Activated CD4-positive, alpha-beta memory T cell treated with anti-CD3 and anti-CD28 coated beads for 36 hours (primary cell): ENCODE measurements at regions of chr17 and their contacts with region 1.

Region 1: GRCh38 chr17:44324571-44325275 is at the start of gene SLC25A39:
- DNase-seq: peak; percentile 96
- H3K4me3 Mint-ChIP-seq: peak within 1 kb of the TSS; percentile 89
- H3K27ac Mint-ChIP-seq: peak within 1 kb of the TSS; percentile 94
- H3K4me1 Mint-ChIP-seq: peaks cover 21% of the 10 kb centered on the region
- H3K27me3 Mint-ChIP-seq: no peaks in the 10 kb centered on the region
- total RNA-seq, gene SLC25A39: 121 to 122 TPM

Region 2: DNA sequence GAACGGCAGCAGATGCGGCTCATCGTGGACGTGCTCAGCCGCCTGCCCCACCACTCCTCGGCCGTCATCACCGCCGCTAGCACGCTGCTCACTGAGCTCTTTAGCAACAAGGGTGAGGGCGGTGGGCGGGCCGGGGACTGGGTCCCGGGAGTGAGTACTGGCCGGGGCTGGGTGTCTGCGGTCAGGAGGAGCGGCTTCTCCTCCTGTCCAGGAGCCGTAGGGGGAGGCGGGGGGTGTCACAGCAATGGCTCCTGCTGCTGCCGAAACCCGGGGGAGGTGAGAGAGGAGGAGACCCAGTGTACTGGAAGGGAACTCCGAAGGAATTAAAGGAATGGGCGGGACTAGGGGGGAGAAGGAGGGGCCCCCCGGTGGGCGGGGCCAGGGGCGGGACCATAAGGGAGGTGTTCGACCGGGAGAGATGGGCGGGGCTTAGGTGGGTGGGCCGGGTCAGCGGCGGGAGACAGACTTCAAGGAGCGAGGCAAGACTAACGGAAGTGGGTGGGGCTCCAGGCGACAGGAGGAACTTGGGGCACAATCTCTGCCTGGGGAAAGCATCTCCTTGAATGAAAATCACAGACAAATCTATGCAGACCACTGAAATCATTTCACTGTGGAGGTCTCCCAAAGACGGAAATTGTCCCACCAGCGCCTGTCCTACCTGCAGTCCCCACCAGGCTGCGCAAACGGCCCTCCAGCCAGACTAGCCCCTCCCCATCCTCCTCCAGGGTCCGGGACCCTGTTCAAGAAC is 318.0 kb before region 1 on chr17:
- CTCF ChIA-PET with region 1: no interaction called
- POLR2A ChIA-PET with region 1: no interaction called
- intact Hi-C with region 1: loop called (anchors 5 kb)
- DNase-seq: peak; percentile 100
- H3K4me3 Mint-ChIP-seq: peak overlapping the region; percentile 86
- H3K27ac Mint-ChIP-seq: peak overlapping the region; percentile 3
- H3K4me1 Mint-ChIP-seq: peaks cover 23% of the 10 kb centered on the region
- H3K27me3 Mint-ChIP-seq: peaks cover 6% of the 10 kb centered on the region

Region 3: GRCh38 chr17:44141717-44142285 is 182.9 kb before region 1 on chr17 and contains the start of gene HROB:
- CTCF ChIA-PET with region 1: no interaction called
- POLR2A ChIA-PET with region 1: no interaction called
- intact Hi-C with region 1: loop called (anchors 1 kb)
- DNase-seq: peak; percentile 99
- H3K4me3 Mint-ChIP-seq: peak within 1 kb of the TSS; percentile 87
- H3K27ac Mint-ChIP-seq: peak within 1 kb of the TSS; percentile 89
- H3K4me1 Mint-ChIP-seq: peaks cover 24% of the 10 kb centered on the region
- H3K27me3 Mint-ChIP-seq: peaks cover 4% of the 10 kb centered on the region
- total RNA-seq, gene HROB: 17.9 to 19.8 TPM

Region 4: DNA sequence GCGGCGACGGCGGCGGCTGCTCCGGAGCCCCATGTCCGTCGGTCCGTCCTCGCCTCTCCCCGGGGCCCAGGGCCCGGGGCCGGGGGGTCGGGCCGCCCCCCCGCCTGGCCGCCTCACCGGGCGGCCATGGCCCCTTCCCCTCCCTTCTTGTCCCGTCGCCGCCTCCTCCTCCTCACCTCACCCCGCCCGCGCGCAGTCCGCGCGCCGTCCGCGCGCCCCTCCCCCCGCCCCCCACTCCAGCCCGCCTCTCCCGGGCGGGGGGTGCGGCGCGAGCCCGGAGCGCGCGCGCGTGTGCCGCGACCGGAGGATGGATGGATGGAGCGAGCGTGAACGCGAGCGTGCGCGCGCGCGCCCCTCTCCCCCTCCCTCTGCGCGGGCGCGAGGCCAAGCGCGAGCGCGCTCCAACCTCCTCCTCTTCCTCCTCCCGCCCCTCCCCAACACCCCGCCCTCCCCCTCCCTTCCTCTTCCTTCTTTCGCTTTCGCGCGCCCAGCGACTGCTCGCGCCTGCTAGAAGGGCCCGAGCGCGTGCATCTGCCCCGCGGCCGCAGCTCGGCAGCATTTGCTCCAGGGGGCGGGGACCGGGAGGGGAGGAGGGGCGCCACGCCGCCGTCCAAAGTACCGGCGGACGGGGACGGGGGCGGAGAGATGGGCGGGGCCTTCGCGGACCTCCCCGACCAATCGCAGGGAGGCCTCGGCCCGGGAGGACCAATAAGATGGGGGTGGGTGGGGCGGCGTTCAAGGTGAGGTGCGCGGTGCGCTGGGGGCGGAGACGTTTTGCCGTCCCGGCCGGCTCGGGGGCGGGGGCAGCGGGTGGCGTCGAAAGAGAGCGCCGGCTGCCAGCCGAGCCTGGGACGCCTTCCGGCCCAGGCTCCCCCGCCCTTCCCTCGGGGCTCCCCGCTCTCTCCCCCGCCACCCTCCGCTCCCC is 124.9 kb before region 1 on chr17 and contains the start of gene ATXN7L3:
- CTCF ChIA-PET with region 1: interaction called, 8 read pairs
- POLR2A ChIA-PET with region 1: no interaction called
- intact Hi-C with region 1: loop called (anchors 1 kb)
- DNase-seq: peak; percentile 100
- H3K4me3 Mint-ChIP-seq: peak within 1 kb of the TSS; percentile 91
- H3K27ac Mint-ChIP-seq: peak within 1 kb of the TSS; percentile 92
- H3K4me1 Mint-ChIP-seq: peaks cover 41% of the 10 kb centered on the region
- H3K27me3 Mint-ChIP-seq: no peaks in the 10 kb centered on the region
- total RNA-seq, gene ATXN7L3: 63.4 to 69.7 TPM

Region 5: GRCh38 chr17:44308320-44308818 is 16.4 kb before region 1 on chr17 and contains the start of gene RUNDC3A:
- CTCF ChIA-PET with region 1: interaction called, 3 read pairs
- POLR2A ChIA-PET with region 1: no interaction called
- intact Hi-C with region 1: loop called (anchors 2 kb)
- DNase-seq: peak; percentile 88
- H3K4me3 Mint-ChIP-seq: peak within 1 kb of the TSS; percentile 23
- H3K27ac Mint-ChIP-seq: no peak within 1 kb of the TSS
- H3K4me1 Mint-ChIP-seq: peaks cover 7% of the 10 kb centered on the region
- H3K27me3 Mint-ChIP-seq: peaks cover 22% of the 10 kb centered on the region
- total RNA-seq, gene RUNDC3A: not detected

Region 6: DNA sequence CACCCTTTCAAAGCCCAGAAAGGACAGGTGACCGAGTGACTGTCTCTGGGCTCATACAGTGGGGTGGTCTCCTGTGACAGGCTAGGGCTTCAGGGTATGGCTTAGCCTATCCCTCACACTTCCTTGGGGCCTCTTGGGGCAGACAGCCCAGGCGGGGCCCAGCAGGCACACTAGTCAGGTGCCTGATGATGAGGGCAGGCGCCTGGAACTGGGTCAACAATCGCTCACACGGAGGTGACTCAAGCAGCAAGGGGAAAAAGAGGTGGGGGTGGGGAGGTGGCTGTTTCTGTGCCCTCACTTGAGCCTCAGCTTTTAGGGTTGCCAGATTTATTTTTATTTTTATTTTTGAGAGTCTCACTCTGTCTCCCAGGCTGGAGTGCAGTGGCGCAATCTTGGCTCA is 14.0 kb after region 1 on chr17:
- CTCF ChIA-PET with region 1: no interaction called
- POLR2A ChIA-PET with region 1: no interaction called
- intact Hi-C with region 1: no loop called
- DNase-seq: peak; percentile 56
- H3K4me3 Mint-ChIP-seq: no peak overlapping the region
- H3K27ac Mint-ChIP-seq: no peak overlapping the region
- H3K4me1 Mint-ChIP-seq: peaks cover 4% of the 10 kb centered on the region
- H3K27me3 Mint-ChIP-seq: no peaks in the 10 kb centered on the region

Region 7: GRCh38 chr17:45021607-45022287 is 697.0 kb after region 1 on chr17:
- CTCF ChIA-PET with region 1: no interaction called
- POLR2A ChIA-PET with region 1: no interaction called
- intact Hi-C with region 1: no loop called
- DNase-seq: peak; percentile 71
- H3K4me3 Mint-ChIP-seq: peak overlapping the region; percentile 12
- H3K27ac Mint-ChIP-seq: no peak overlapping the region
- H3K4me1 Mint-ChIP-seq: peaks cover 16% of the 10 kb centered on the region
- H3K27me3 Mint-ChIP-seq: peaks cover 35% of the 10 kb centered on the region